Dendritic cell treated with granulocyte-macrophage colony-stimulating factor and Interleukin-4, amounts not matched to agents 40 ng/mL and 50 ng/mL, for 4 days (primary cell): ENCODE measurements at regions of chr17 and their contacts with region 1.

Region 1: DNA sequence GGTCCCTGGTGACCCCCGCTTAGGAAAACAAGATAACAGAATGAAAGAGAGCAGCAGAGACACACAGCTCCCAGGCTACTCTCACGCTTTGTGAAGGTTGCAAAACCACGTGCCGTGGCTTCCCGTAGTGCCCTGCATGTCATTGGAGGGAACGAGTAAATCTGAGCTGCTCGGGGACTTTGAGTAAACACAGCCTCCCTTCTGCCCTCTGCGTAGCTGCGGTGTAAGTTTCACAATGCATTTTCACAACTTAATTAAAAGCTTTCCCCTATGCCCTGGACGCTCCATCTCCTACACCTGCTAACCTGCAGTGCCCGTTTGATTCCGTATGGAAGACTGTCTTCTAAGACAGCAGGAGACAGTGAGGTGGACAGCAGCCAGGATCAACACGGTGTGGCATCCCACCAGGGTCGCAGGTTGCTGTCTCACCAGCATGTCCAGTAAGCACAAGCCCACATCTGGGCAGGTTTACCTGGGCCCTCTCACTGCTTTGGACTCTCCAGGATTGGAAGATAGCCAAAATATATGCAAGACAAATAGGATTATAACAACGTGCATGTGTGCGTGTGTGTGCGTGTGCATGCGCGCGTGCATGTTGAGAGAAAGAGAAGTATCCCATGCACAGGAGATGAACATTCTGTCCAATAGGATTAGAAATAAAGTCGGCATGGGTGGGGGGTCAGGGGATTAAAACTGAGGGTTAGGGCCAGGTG is 116.4 kb upstream of the RCVRN start:
- H3K4me3 Mint-ChIP-seq: peak overlapping the region; percentile 21
- H3K27ac Mint-ChIP-seq: peak overlapping the region; percentile 89
- H3K4me1 Mint-ChIP-seq: peaks cover 74% of the 10 kb centered on the region
- H3K27me3 Mint-ChIP-seq: no peaks in the 10 kb centered on the region

Region 2: GRCh38 chr17:9982159-9982558 is 39.3 kb before region 1 on chr17:
- intact Hi-C with region 1: no loop called
- H3K4me3 Mint-ChIP-seq: no peak overlapping the region
- H3K27ac Mint-ChIP-seq: peak overlapping the region; percentile 20
- H3K4me1 Mint-ChIP-seq: peaks cover 68% of the 10 kb centered on the region
- H3K27me3 Mint-ChIP-seq: no peaks in the 10 kb centered on the region

Region 3: DNA sequence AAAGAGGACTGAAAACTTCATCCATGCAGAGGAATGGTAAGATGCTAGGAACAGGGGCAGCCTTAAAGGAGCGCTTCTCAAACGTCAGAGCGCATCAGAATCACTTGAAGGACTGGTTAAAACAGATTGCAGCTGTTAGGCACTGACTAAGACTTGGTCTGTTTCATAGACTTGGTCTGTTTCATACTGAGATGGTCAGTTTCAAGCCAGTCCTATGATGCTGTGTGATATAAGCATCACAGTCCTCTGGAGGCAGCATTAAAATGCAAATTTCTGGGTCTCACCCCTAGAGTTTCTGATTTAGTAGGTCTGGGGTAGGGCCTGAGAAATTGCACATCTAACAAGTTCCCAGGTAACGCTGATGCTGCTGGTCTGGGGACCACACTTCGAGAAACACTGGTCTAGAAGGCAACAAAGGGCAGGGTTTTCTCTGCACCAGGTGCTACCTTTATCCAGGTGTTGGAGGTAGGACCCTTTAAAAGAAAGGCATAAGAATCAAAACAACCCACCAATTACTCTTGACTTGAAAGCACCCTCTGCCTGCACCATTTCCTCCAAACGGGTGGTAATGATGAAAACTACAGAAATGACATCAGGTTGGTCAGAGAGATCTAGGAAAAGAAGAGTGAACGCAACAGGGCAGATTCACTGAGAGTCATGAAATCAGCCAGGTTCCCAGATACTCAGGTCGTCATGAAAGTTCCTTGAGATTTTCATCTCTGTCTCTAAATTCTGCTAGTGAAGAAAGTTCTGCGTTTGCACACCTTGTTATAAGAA is 21.3 kb before region 1 on chr17:
- intact Hi-C with region 1: no loop called
- H3K4me3 Mint-ChIP-seq: no peak overlapping the region
- H3K27ac Mint-ChIP-seq: peak overlapping the region; percentile 52
- H3K4me1 Mint-ChIP-seq: peaks cover 29% of the 10 kb centered on the region
- H3K27me3 Mint-ChIP-seq: no peaks in the 10 kb centered on the region

Region 4: GRCh38 chr17:10059369-10060211 is 38.2 kb after region 1 on chr17:
- intact Hi-C with region 1: loop called (anchors 5 kb)
- H3K4me3 Mint-ChIP-seq: no peak overlapping the region
- H3K27ac Mint-ChIP-seq: peak overlapping the region; percentile 67
- H3K4me1 Mint-ChIP-seq: peaks cover 63% of the 10 kb centered on the region
- H3K27me3 Mint-ChIP-seq: peaks cover 5% of the 10 kb centered on the region